PC-3 (cell line): ENCODE measurements at regions of chr13 and their contacts with region 1.

Region 1: GRCh38 chr13:44141725-44142539 is 231.7 kb upstream of the SERP2 start:
- DNase-seq: peak; percentile 93
- ATAC-seq: peak; percentile 95
- H3K4me3 ChIP-seq: peak overlapping the region; percentile 75
- H3K27ac ChIP-seq: peak overlapping the region; percentile 84
- H3K4me1 ChIP-seq: peaks cover 29% of the 10 kb centered on the region
- H3K27me3 ChIP-seq: no peaks in the 10 kb centered on the region
- CTCF ChIP-seq: no peak

Region 2: GRCh38 chr13:42524487-42525034 is 1617.4 kb before region 1 on chr13:
- CTCF ChIA-PET with region 1: no interaction called
- POLR2A ChIA-PET with region 1: no interaction called
- intact Hi-C with region 1: no loop called
- DNase-seq: peak; percentile 30
- ATAC-seq: no peak
- H3K4me3 ChIP-seq: no peak overlapping the region
- H3K27ac ChIP-seq: peak overlapping the region; percentile 92
- H3K4me1 ChIP-seq: peaks cover 18% of the 10 kb centered on the region
- H3K27me3 ChIP-seq: no peaks in the 10 kb centered on the region
- CTCF ChIP-seq: no peak

Region 3: GRCh38 chr13:44075113-44075512 is 66.8 kb before region 1 on chr13:
- CTCF ChIA-PET with region 1: no interaction called
- POLR2A ChIA-PET with region 1: no interaction called
- intact Hi-C with region 1: no loop called
- DNase-seq: no peak
- ATAC-seq: no peak
- H3K4me3 ChIP-seq: no peak overlapping the region
- H3K27ac ChIP-seq: no peak overlapping the region
- H3K4me1 ChIP-seq: no peaks in the 10 kb centered on the region
- H3K27me3 ChIP-seq: no peaks in the 10 kb centered on the region
- CTCF ChIP-seq: no peak

Region 4: GRCh38 chr13:44218501-44219240 is 76.7 kb after region 1 on chr13:
- CTCF ChIA-PET with region 1: no interaction called
- POLR2A ChIA-PET with region 1: interaction called, 7 read pairs
- intact Hi-C with region 1: loop called (anchors 2 kb)
- DNase-seq: peak; percentile 67
- ATAC-seq: peak; percentile 70
- H3K4me3 ChIP-seq: no peak overlapping the region
- H3K27ac ChIP-seq: peak overlapping the region; percentile 93
- H3K4me1 ChIP-seq: peaks cover 42% of the 10 kb centered on the region
- H3K27me3 ChIP-seq: no peaks in the 10 kb centered on the region
- CTCF ChIP-seq: no peak

Region 5: GRCh38 chr13:44243198-44243857 is 101.4 kb after region 1 on chr13:
- CTCF ChIA-PET with region 1: no interaction called
- POLR2A ChIA-PET with region 1: interaction called, 27 read pairs
- intact Hi-C with region 1: no loop called
- DNase-seq: peak; percentile 59
- ATAC-seq: peak; percentile 81
- H3K4me3 ChIP-seq: no peak overlapping the region
- H3K27ac ChIP-seq: peak overlapping the region; percentile 92
- H3K4me1 ChIP-seq: peaks cover 20% of the 10 kb centered on the region
- H3K27me3 ChIP-seq: no peaks in the 10 kb centered on the region
- CTCF ChIP-seq: peak; percentile 64

Region 6: GRCh38 chr13:44274452-44275205 is 132.7 kb after region 1 on chr13:
- CTCF ChIA-PET with region 1: no interaction called
- POLR2A ChIA-PET with region 1: interaction called, 27 read pairs
- intact Hi-C with region 1: no loop called
- DNase-seq: peak; percentile 47
- ATAC-seq: peak; percentile 50; the same call in 1 of the 2 replicates
- H3K4me3 ChIP-seq: peak overlapping the region; percentile 22; the same call in 1 of the 2 replicates
- H3K27ac ChIP-seq: peak overlapping the region; percentile 67
- H3K4me1 ChIP-seq: peaks cover 42% of the 10 kb centered on the region
- H3K27me3 ChIP-seq: no peaks in the 10 kb centered on the region
- CTCF ChIP-seq: no peak

Region 7: GRCh38 chr13:44300895-44301638 is 159.1 kb after region 1 on chr13:
- CTCF ChIA-PET with region 1: no interaction called
- POLR2A ChIA-PET with region 1: no interaction called
- intact Hi-C with region 1: loop called (anchors 1 kb)
- DNase-seq: peak; percentile 89
- ATAC-seq: peak; percentile 76
- H3K4me3 ChIP-seq: 0 out of 2 replicates have a peak overlapping the region, but pooled peaks have one; percentile 9
- H3K27ac ChIP-seq: peak overlapping the region; percentile 100
- H3K4me1 ChIP-seq: peaks cover 66% of the 10 kb centered on the region
- H3K27me3 ChIP-seq: no peaks in the 10 kb centered on the region
- CTCF ChIP-seq: no peak

Region 8: DNA sequence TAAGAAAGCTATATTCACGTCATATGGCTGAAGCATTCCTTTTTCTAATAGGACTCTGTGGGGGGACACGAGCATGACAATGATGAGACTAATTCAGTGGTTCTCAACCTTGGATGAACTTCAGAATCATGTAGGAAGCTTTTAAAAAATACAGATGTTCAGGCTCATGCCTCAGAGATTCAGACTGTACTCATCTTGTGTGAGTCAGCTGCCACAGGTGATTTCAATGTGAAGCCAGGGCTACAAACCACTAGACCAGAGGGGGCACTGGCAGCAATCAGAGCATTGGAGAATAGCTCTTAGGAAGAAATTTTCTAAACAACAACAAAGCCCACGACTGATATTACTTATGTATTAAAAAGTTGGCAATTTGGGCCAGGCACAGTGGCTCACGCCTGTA is 323.4 kb after region 1 on chr13:
- CTCF ChIA-PET with region 1: no interaction called
- POLR2A ChIA-PET with region 1: no interaction called
- intact Hi-C with region 1: no loop called
- DNase-seq: peak; percentile 38
- ATAC-seq: peak; percentile 40; the same call in 1 of the 2 replicates
- H3K4me3 ChIP-seq: no peak overlapping the region
- H3K27ac ChIP-seq: no peak overlapping the region
- H3K4me1 ChIP-seq: peaks cover 6% of the 10 kb centered on the region; the same call in 1 of the 2 replicates
- H3K27me3 ChIP-seq: no peaks in the 10 kb centered on the region
- CTCF ChIP-seq: no peak